ENCODE measurements at regions of chr22 and their contacts with region 1.

Region 1: DNA sequence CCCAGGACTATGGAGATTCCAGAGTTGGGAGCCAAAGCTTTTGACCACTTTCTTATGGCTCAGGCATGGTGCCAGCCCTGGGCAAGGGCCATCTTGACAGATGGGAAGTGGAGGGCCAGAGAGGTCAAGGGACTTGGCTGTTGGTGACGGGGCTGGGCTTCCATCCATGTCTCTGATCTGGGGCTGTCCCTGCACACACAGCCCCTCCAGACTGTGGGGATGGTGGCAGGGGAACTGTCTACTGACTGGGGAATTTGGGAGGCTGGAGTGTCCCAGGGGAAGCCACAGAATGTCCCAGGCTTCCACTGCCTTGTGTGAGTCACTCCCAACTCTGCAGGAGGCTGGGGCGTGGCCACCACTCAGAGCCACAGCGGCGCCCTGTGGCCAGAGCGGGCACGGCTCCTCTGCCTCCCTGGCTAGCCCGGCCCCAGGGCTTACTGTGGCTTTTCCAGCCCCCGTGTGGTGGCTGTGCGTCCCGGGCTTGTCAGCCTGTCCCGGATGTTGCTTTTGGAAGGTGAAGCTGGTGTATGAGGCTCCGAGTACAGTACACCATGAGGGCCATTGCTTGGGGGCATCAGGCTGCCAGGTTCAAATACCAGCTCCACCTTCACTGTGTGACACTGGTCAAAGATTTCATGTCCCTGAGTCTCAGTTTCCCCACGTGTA is 19.6 kb downstream of the C22orf23 start:
- DNase-seq: peak; percentile 89
- H3K4me3 ChIP-seq: no peak overlapping the region
- H3K27ac ChIP-seq: no peak overlapping the region
- H3K4me1 ChIP-seq: peaks cover 32% of the 10 kb centered on the region
- CTCF ChIP-seq: peak; percentile 94

Region 2: GRCh38 chr22:37817705-37818408 is 116.0 kb before region 1 on chr22:
- CTCF ChIA-PET with region 1: no interaction called
- POLR2A ChIA-PET with region 1: no interaction called
- intact Hi-C with region 1: loop called (anchors 1 kb)
- DNase-seq: peak; percentile 76
- H3K4me3 ChIP-seq: no peak overlapping the region
- H3K27ac ChIP-seq: no peak overlapping the region
- H3K4me1 ChIP-seq: no peaks in the 10 kb centered on the region
- CTCF ChIP-seq: peak; percentile 86

Region 3: DNA sequence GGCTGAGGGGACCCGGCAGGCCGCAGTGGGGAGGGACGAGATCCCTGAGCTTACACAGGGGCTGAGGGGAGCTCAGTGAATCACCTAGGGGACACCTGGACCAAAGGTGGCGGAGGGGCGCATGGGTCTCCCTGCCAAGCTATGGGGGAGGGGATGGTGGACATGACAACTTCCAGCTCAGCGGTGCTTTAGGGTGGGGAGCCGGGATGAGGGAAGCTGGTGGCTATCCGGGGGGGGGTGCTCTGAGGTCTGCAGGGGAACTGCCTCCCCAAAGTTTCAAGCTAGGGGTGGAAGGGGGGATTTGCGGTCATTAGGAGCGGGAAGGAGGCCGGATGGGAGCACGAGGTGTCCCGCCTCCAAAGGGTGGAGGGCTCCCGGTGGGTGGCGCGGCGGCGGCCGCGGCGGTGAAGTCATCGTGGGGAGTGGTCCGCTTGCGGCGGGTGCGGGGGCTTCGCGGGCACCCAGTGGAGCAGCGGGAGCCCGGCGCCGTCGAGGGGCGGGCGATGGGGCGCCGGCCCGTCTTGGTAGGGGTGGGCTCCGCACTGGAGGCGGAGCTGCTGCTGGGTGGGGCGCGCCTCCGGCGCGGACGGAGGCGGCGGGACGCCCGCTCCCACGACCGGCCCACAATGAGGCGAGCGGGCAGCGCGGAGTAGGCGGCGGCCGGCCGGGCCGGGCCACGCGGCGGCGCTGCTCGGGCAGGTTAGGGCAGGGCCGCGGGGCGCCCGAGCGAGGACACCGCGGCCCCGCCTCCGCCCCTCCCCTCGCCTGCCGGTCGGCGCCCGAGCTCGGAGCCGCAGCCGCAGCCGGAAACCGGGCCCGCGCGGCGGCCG is 28.1 kb before region 1 on chr22 and contains the start of gene MICALL1:
- CTCF ChIA-PET with region 1: interaction called, 4 read pairs
- POLR2A ChIA-PET with region 1: no interaction called
- intact Hi-C with region 1: loop called (anchors 1 kb)
- DNase-seq: peak; percentile 83
- H3K4me3 ChIP-seq: peak within 1 kb of the TSS; percentile 82
- H3K27ac ChIP-seq: no peak within 1 kb of the TSS
- H3K4me1 ChIP-seq: peaks cover 17% of the 10 kb centered on the region
- CTCF ChIP-seq: 0 out of 2 replicates have a peak, but pooled peaks have one; percentile 30
- total RNA-seq, gene MICALL1: 18.3 and 18.5 TPM in 2 replicates

Region 4: GRCh38 chr22:37996515-37997246 is 62.8 kb after region 1 on chr22:
- CTCF ChIA-PET with region 1: interaction called, 14 read pairs
- POLR2A ChIA-PET with region 1: no interaction called
- intact Hi-C with region 1: no loop called
- DNase-seq: peak; percentile 33
- H3K4me3 ChIP-seq: no peak overlapping the region
- H3K27ac ChIP-seq: no peak overlapping the region
- H3K4me1 ChIP-seq: peaks cover 13% of the 10 kb centered on the region
- CTCF ChIP-seq: no peak

Measured in OCI-LY7 (cell line).